GM12878 (cell line): ENCODE measurements at regions of chr21 and their contacts with region 1.

Region 1: DNA sequence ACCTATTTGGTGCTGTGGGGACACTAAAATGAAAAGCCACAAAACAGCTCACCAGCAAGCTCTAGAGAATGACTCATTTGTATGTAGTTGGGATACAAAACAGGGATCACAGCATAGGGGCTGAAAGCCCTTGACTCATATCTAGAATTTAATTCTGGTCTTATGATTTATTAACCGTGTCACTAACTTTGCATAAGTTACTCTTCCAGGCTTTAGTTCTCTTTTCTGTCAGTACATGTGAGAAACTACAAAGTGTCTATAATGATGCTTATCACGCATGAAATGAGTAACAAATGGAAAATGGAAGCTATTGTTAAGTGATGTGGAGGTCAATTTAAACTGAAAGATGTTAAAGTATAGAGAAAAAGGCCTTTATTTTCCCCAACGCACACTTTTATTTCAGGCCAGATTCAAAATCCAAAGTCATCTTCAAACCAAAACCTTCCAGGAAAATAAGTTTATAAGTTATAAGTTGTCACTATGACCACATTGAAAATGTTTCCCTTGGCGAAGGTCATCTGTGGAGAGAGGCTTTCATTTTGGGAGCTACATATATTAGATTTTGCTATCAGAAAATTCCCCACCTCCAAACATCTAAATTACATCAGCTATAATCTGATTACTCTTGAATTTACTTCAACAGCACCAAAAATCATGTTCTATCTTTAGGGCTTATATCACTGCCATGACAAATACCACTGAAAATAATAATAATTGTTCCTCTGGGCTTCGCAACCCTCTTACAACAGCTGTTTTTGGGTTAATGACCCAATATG is 430.5 kb downstream of the MRPL39 start:
- DNase-seq: peak; percentile 87
- ATAC-seq: peak; percentile 92
- H3K4me3 ChIP-seq: no peak overlapping the region
- H3K27ac ChIP-seq: peak overlapping the region; percentile 58; the same call in 1 of the 2 replicates
- H3K4me1 ChIP-seq: peaks cover 12% of the 10 kb centered on the region
- H3K27me3 ChIP-seq: no peaks in the 10 kb centered on the region
- CTCF ChIP-seq: no peak
- EP300 ChIP-seq: peak; percentile 95 to 97
- POLR2A ChIP-seq: no peak
- RAD21 ChIP-seq: no peak

Region 2: DNA sequence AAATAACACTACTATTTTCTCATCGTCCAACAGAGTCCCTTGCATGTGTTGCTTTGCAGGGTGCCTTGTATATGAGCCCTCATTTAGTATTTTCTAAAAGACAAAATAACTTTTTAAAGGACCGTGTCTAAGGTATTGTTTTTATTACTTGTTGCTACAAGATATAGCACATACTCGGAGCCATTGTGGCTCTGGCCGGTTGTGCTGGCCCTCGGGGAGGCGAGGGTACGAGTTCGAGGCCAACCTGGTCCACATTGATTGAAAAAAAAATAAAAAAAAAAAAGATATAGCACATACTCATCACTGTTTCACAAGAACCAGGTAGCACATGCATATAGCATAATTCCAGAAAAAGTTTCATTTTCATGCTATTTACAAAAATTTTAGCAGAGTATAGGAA is 438.8 kb before region 1 on chr21:
- CTCF ChIA-PET with region 1: no interaction called
- POLR2A ChIA-PET with region 1: no interaction called
- RAD21 ChIA-PET with region 1: no interaction called
- SMC1A ChIA-PET with region 1: no interaction called
- in situ Hi-C with region 1: no loop called
- intact Hi-C with region 1: no loop called
- DNase-seq: no peak
- ATAC-seq: no peak
- H3K4me3 ChIP-seq: no peak overlapping the region
- H3K27ac ChIP-seq: no peak overlapping the region
- H3K4me1 ChIP-seq: no peaks in the 10 kb centered on the region
- H3K27me3 ChIP-seq: no peaks in the 10 kb centered on the region
- CTCF ChIP-seq: no peak
- EP300 ChIP-seq: no peak
- POLR2A ChIP-seq: no peak
- RAD21 ChIP-seq: no peak

Region 3: GRCh38 chr21:24955275-24955961 is 221.4 kb before region 1 on chr21:
- CTCF ChIA-PET with region 1: no interaction called
- POLR2A ChIA-PET with region 1: no interaction called
- RAD21 ChIA-PET with region 1: no interaction called
- SMC1A ChIA-PET with region 1: interaction called, 4 read pairs
- in situ Hi-C with region 1: no loop called
- intact Hi-C with region 1: loop called (anchors 5 kb)
- DNase-seq: peak; percentile 82
- ATAC-seq: peak; percentile 92
- H3K4me3 ChIP-seq: no peak overlapping the region
- H3K27ac ChIP-seq: no peak overlapping the region
- H3K4me1 ChIP-seq: no peaks in the 10 kb centered on the region; the same call in 1 of the 2 replicates
- H3K27me3 ChIP-seq: no peaks in the 10 kb centered on the region
- CTCF ChIP-seq: no peak
- EP300 ChIP-seq: 0 out of 4 replicates have a peak, but pooled peaks of 1 of the 2 experiments have one; percentile 33
- POLR2A ChIP-seq: no peak
- RAD21 ChIP-seq: no peak

Region 4: DNA sequence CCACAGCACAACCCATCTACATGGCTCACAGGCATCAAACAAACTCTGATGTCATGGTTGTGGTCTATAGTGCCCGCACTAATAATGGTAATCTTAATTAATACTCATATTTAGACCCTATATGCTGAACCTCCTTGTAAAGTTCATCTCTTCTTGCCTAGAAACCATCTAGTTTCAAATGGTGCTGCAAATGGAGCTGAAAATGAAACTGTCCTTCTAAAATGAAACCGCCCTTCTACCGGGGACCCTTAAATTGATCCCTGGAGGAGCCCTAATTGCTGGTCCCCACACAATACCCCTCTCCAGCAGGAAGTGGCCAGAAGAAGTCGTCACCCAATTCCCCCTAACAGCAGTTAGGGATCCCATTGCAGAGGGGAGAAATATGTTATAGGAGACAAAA is 182.1 kb before region 1 on chr21:
- CTCF ChIA-PET with region 1: no interaction called
- POLR2A ChIA-PET with region 1: no interaction called
- RAD21 ChIA-PET with region 1: no interaction called
- SMC1A ChIA-PET with region 1: no interaction called
- in situ Hi-C with region 1: no loop called
- intact Hi-C with region 1: no loop called
- DNase-seq: no peak
- ATAC-seq: peak; percentile 78
- H3K4me3 ChIP-seq: no peak overlapping the region
- H3K27ac ChIP-seq: no peak overlapping the region; the same call in 1 of the 2 replicates
- H3K4me1 ChIP-seq: no peaks in the 10 kb centered on the region; the same call in 1 of the 2 replicates
- H3K27me3 ChIP-seq: no peaks in the 10 kb centered on the region
- CTCF ChIP-seq: no peak
- EP300 ChIP-seq: no peak
- POLR2A ChIP-seq: no peak
- RAD21 ChIP-seq: no peak

Region 5: GRCh38 chr21:25039461-25040380 is 137.1 kb before region 1 on chr21:
- CTCF ChIA-PET with region 1: no interaction called
- POLR2A ChIA-PET with region 1: no interaction called
- RAD21 ChIA-PET with region 1: no interaction called
- SMC1A ChIA-PET with region 1: no interaction called
- in situ Hi-C with region 1: no loop called
- intact Hi-C with region 1: loop called (anchors 5 kb)
- DNase-seq: peak; percentile 82
- ATAC-seq: peak; percentile 89
- H3K4me3 ChIP-seq: peak overlapping the region; percentile 20; the same call in 1 of the 2 replicates
- H3K27ac ChIP-seq: 0 out of 2 replicates have a peak overlapping the region, but pooled peaks have one; percentile 4
- H3K4me1 ChIP-seq: 0 out of 2 replicates have a peak, but pooled peaks cover 2% of the 10 kb centered on the region
- H3K27me3 ChIP-seq: no peaks in the 10 kb centered on the region
- CTCF ChIP-seq: peak; percentile 36 to 67 (median 66)
- EP300 ChIP-seq: 0 out of 4 replicates have a peak, but pooled peaks of 1 of the 2 experiments have one; percentile 40
- POLR2A ChIP-seq: no peak
- RAD21 ChIP-seq: peak; percentile 71

Region 6: DNA sequence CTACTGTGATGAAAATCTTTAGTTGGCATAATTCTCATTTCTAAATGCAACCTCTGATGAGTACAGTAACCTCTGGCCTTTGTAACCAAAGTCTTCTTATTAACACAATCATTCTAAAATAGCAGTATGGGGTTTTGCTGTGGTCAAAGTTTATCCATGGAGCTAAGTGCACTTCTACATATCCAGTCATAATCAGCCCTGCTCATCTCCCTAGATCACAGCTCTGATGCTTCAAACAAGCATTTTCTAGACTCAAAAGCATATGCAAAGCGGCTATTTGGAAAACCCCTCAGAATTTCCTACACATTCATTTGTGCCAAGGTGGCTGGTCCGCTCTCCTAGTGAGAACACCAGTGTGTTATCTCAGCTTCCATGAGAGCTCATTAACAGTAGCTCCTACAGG is 11.9 kb after region 1 on chr21:
- CTCF ChIA-PET with region 1: interaction called, 14 read pairs
- POLR2A ChIA-PET with region 1: interaction called, 6 read pairs
- RAD21 ChIA-PET with region 1: interaction called, 20 read pairs
- SMC1A ChIA-PET with region 1: interaction called, 33 read pairs
- in situ Hi-C with region 1: no loop called
- intact Hi-C with region 1: loop called (anchors 1 kb)
- DNase-seq: peak; percentile 88
- ATAC-seq: peak; percentile 83
- H3K4me3 ChIP-seq: no peak overlapping the region
- H3K27ac ChIP-seq: 0 out of 2 replicates have a peak overlapping the region, but pooled peaks have one; percentile 30
- H3K4me1 ChIP-seq: peaks cover 23% of the 10 kb centered on the region; the same call in 1 of the 2 replicates
- H3K27me3 ChIP-seq: no peaks in the 10 kb centered on the region
- CTCF ChIP-seq: no peak
- EP300 ChIP-seq: peak in 1 of 2 experiments; percentile 64; a peak in 2 of 4 replicates
- POLR2A ChIP-seq: no peak
- RAD21 ChIP-seq: 0 out of 2 replicates have a peak, but pooled peaks have one; percentile 8